ENCODE measurements at regions of chr1 and their contacts with region 1.

Region 1: GRCh38 chr1:1164701-1165451 is 8.8 kb upstream of the TTLL10 start:
- DNase-seq: no peak
- H3K4me3 ChIP-seq: no peak overlapping the region
- H3K27ac ChIP-seq: no peak overlapping the region
- H3K27me3 ChIP-seq: peaks cover 0 to 74% (median 29%) of the 10 kb centered on the region in 45 donors
- CTCF ChIP-seq: no peak

Region 2: GRCh38 chr1:1122078-1122811 is 42.6 kb before region 1 on chr1:
- intact Hi-C with region 1: loop called in 1 of 2 experiments (anchors 2 kb)
- DNase-seq: peak; percentile 69 to 89 (median 78)
- H3K4me3 ChIP-seq: peak overlapping the region in 52 of 59 donors; percentile 1 to 59 (median 32)
- H3K27ac ChIP-seq: peak overlapping the region in 19 of 59 donors; percentile 6 to 67 (median 51)
- H3K27me3 ChIP-seq: no peaks in the 10 kb centered on the region
- CTCF ChIP-seq: peak; percentile 39 to 98 (median 91)

Region 3: DNA sequence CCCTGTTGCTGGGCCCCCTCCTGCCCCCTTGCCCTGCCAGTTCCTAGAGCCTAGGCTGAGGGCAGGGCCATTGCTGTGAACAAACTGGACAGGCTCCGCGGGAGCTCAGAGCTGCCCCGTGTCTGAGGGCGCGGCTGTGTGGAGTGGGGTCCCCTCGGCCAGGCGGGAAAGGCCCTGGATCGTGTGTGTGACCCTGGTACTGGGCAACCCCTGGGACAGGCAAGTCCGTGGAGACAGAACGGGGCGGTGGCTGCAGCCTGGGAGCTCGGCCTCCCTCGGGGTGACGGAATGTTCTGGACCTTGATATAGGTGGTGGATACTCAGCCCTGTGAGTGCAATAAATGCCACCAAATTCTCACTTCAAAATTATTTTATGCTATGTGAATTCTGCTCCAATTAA is 21.2 kb before region 1 on chr1:
- intact Hi-C with region 1: loop called in 1 of 2 experiments (anchors 2 kb)
- DNase-seq: no peak
- H3K4me3 ChIP-seq: no peak overlapping the region
- H3K27ac ChIP-seq: no peak overlapping the region
- H3K27me3 ChIP-seq: peaks cover 0 to 10% (median 0%) of the 10 kb centered on the region in 45 donors
- CTCF ChIP-seq: no peak